ENCODE measurements at regions of chr4 and their contacts with region 1.

Region 1: DNA sequence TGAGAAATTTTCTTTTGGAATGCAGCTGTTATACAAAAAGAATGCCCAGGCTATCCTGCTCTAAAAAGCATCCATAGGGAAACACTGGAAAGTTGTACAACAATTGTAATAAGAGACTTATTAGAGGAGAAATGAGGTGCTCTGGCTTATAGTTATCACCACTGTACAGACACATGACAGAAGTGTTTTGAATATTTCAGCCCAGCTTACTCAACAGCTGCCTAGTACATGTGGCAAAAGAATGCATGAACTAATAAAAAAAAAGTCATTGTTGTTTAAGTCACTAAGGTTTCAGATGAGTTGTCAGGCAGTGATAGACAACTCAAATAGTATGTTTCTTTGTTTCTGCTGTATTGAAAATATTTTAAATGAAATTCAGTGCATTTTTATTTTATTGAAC is 307.7 kb downstream of the GPM6A start:
- DNase-seq: no peak

Region 2: DNA sequence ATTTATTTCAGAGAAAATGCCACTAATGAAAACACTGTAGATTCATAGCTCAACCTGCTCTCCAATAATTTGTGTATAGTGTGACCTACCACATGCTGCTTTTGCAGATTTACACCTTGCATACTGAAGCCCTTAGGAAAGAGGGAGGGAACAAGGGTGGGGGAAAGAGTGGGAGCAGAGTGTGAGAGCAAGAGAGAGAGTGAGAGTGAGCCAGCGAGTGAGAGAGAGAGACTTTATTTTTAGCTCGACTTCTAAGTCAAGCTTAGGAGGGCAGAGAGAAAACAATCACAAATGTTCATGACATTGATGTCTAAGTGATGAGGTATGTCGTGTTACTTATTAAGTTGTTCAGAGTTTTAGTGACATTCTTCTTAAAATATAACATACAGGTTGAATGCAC is 1861.8 kb before region 1 on chr4:
- intact Hi-C with region 1: no loop called
- DNase-seq: no peak

Region 3: DNA sequence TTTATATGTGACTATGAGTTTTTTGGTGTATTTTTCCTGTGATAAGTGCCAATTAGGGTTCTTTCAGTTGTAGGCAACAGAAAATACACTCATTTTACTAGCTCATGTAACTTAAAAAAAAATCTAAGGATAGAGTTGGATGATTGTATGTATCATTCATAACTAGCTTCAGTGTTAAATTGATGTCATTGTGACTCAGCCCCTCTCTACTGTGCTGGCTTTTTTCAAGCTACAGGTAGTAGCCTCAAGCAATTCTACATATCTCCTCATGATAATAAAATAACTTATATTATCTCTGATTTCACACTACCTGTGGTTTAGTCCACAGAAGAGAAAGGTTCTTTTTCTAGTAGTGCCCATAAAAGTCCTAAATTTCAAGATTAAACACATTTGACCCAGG is 573.2 kb after region 1 on chr4:
- intact Hi-C with region 1: loop called in 1 of 2 experiments (anchors 10 kb)
- DNase-seq: no peak

Region 4: DNA sequence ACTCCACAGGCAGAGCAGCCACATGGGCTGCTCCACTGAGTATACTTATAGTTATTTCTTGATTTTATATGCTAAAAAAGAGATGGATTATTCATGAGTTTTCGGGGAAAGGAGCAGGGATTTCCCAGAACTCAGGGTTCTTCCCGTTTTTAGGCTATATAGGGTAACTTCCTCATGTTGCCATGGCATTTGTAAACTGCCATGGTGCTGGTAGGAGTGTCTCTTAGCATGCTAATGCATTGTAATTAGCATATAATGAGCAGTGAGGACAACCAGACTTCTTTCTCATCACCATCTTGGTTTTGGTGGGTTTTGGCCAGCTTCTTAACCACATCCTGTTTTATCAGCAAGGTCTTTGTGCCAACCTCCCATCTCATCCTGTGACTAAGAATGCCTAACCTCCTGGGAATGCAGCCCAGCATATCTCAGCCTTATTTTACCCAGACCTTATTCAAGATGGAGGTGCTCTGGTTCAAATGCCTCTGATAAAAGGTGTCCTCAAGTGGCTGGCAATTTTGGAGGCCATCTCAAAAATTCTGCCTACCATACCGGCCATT is 1501.4 kb after region 1 on chr4:
- intact Hi-C with region 1: loop called in 1 of 2 experiments (anchors 5 kb)
- DNase-seq: no peak

Measured in posterior vena cava (tissue), 2 donors.